ENCODE measurements at regions of chr4 and their contacts with region 1.

Region 1: DNA sequence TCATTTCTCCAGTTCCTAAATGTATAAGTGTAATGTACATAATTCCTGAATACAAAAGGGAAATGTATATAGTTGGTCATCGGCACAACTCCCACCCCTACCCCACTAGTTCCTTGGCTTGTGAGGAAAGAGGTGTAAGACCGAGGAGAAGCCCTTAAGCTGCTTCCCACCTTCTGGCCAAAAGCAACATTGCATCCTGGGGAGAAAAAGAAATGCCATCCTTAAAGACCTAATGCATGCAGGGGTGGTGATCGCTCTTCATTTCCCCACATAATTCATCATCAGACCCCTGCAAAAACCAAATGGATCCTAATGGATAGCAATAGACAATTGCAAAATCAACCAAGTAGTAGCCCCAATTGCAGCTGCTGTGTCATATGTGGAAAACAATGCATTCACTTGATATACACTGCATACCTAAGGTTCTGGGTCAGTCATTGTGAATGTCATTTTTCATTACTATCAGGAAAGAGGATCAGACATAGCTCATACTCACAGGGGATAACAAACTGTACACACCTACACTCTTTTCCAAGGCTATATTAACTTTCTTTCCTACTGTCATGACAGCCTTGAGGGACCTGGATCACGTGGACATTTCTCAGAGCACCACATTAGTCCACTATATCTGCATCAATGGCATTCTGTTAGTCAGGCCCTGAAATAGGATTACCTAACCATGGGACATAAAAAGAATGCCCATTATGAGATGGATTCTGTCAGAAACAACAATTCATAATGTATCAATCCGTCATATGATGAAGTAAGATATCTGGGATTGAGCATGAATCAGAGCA is 31.7 kb upstream of the NFXL1 start:
- DNase-seq: no peak
- H3K4me3 ChIP-seq: no peak overlapping the region
- H3K27ac ChIP-seq: no peak overlapping the region
- H3K4me1 ChIP-seq: no peaks in the 10 kb centered on the region
- H3K27me3 ChIP-seq: no peaks in the 10 kb centered on the region
- CTCF ChIP-seq: peak; percentile 22; the same call in 1 of the 2 replicates

Region 2: GRCh38 chr4:46839128-46839527 is 1107.0 kb before region 1 on chr4:
- CTCF ChIA-PET with region 1: no interaction called
- POLR2A ChIA-PET with region 1: no interaction called
- intact Hi-C with region 1: loop called (anchors 10 kb)
- DNase-seq: no peak
- H3K4me3 ChIP-seq: no peak overlapping the region
- H3K27ac ChIP-seq: no peak overlapping the region
- H3K4me1 ChIP-seq: no peaks in the 10 kb centered on the region
- H3K27me3 ChIP-seq: no peaks in the 10 kb centered on the region
- CTCF ChIP-seq: no peak

Measured in PC-9 (cell line).